Panc1 (cell line): ENCODE measurements at regions of chr19 and their contacts with region 1.

Region 1: GRCh38 chr19:40633207-40633606 is 32.0 kb downstream of the LTBP4 start:
- DNase-seq: no peak
- ATAC-seq: no peak
- H3K4me3 ChIP-seq: no peak overlapping the region
- H3K27ac ChIP-seq: no peak overlapping the region
- H3K4me1 ChIP-seq: no peaks in the 10 kb centered on the region
- H3K27me3 ChIP-seq: no peaks in the 10 kb centered on the region
- CTCF ChIP-seq: no peak

Region 2: GRCh38 chr19:40425450-40426287 is 207.5 kb before region 1 on chr19 and contains the start of gene SERTAD1:
- CTCF ChIA-PET with region 1: no interaction called
- POLR2A ChIA-PET with region 1: no interaction called
- in situ Hi-C with region 1: no loop called
- intact Hi-C with region 1: no loop called
- DNase-seq: peak; percentile 87
- ATAC-seq: peak; percentile 85
- H3K4me3 ChIP-seq: peak within 1 kb of the TSS; percentile 85 to 93
- H3K27ac ChIP-seq: peak within 1 kb of the TSS; percentile 94
- H3K4me1 ChIP-seq: peaks cover 24% of the 10 kb centered on the region
- H3K27me3 ChIP-seq: no peaks in the 10 kb centered on the region
- CTCF ChIP-seq: peak; percentile 92
- total RNA-seq, gene SERTAD1: 13.4 TPM

Region 3: GRCh38 chr19:40465557-40466150 is 167.6 kb before region 1 on chr19 and contains the start of gene BLVRB:
- CTCF ChIA-PET with region 1: interaction called, 10 read pairs
- POLR2A ChIA-PET with region 1: no interaction called
- in situ Hi-C with region 1: no loop called
- intact Hi-C with region 1: no loop called
- DNase-seq: peak; percentile 92
- ATAC-seq: peak; percentile 96
- H3K4me3 ChIP-seq: peak within 1 kb of the TSS; percentile 68 to 82
- H3K27ac ChIP-seq: peak within 1 kb of the TSS; percentile 82
- H3K4me1 ChIP-seq: peaks cover 10% of the 10 kb centered on the region; the same call in 1 of the 2 replicates
- H3K27me3 ChIP-seq: no peaks in the 10 kb centered on the region
- CTCF ChIP-seq: no peak
- total RNA-seq, gene BLVRB: 45.6 TPM

Region 4: DNA sequence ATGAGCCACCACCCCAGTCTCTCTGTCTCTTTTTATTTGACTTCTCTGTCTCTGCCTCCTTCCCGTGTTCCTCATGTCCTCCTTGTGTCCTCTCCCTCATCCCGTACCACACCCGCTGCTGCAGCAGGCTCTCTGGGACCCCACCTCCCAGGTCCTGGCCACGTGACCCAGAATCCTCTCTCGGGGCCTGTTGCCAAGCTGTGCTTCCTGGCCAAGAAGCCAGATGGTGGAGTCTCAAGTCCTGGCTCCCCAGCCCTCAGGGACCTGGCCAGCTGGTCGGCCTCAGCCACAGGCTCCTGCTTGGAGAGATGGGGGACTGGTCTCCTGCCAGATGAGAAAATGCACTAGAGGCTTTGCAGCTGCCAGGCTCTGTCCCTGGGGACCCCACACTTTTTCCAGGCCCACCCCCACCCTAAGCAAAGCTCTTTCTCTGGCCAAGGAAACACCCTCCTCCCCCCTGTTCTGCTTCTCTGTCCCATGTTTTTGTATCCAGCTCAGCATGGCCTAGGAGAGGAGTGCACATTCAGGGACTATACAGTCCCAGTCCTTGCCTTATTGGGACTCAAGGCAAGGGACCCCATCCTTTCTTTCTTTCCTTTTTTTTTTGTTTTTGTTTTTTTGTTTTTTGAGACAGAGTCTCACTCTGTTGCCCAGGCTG is 90.9 kb before region 1 on chr19:
- CTCF ChIA-PET with region 1: interaction called, 13 read pairs
- POLR2A ChIA-PET with region 1: no interaction called
- in situ Hi-C with region 1: no loop called
- intact Hi-C with region 1: no loop called
- DNase-seq: no peak
- ATAC-seq: no peak
- H3K4me3 ChIP-seq: no peak overlapping the region
- H3K27ac ChIP-seq: no peak overlapping the region
- H3K4me1 ChIP-seq: no peaks in the 10 kb centered on the region
- H3K27me3 ChIP-seq: no peaks in the 10 kb centered on the region
- CTCF ChIP-seq: no peak

Region 5: GRCh38 chr19:40560092-40560507 is 73.1 kb before region 1 on chr19:
- CTCF ChIA-PET with region 1: interaction called, 14 read pairs
- POLR2A ChIA-PET with region 1: no interaction called
- in situ Hi-C with region 1: no loop called
- intact Hi-C with region 1: no loop called
- DNase-seq: no peak
- ATAC-seq: no peak
- H3K4me3 ChIP-seq: no peak overlapping the region
- H3K27ac ChIP-seq: no peak overlapping the region
- H3K4me1 ChIP-seq: no peaks in the 10 kb centered on the region
- H3K27me3 ChIP-seq: no peaks in the 10 kb centered on the region
- CTCF ChIP-seq: no peak

Region 6: DNA sequence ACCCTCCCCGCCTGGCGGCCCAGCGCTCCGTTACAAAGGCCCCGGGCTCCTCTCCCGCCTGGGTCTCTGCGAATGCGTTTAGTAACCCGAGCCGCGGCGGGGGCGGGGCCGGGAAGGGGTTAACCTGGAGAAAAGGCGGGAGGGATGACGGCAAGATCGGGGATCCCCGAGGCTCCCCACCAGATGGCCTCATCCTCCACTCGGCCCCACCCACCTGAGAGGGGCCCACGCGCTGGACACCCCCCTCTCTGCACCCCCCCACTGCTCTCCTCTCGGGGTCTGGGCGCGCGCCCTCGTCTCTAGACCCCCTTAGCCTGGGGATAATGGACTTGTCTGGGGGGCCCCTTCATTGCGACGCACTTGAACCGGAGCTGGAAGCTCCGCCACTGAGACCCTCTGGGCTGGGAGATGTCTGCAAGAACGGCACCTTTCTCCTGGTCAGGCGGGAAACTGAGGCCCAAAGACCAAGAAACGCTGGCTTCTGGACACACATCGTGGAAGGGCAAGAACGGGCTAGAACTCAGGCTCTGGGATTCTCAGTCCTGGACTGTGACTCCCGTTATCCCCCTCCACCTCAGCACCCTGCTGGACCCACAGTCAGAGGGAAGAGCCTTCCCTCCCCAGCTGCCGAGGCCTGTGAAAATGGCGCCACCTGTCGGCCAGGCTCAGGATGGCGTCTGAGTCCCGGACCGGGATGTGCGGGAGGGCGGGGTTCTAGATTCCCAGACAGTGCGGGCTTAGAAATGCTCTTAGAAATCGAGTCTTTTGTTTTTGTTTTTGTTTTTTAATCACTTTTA is 34.9 kb before region 1 on chr19:
- CTCF ChIA-PET with region 1: no interaction called
- POLR2A ChIA-PET with region 1: no interaction called
- in situ Hi-C with region 1: no loop called
- intact Hi-C with region 1: no loop called
- DNase-seq: no peak
- ATAC-seq: peak; percentile 77
- H3K4me3 ChIP-seq: peak overlapping the region; percentile 50 to 59
- H3K27ac ChIP-seq: peak overlapping the region; percentile 66; the same call in 1 of the 2 replicates
- H3K4me1 ChIP-seq: peaks cover 22% of the 10 kb centered on the region
- H3K27me3 ChIP-seq: no peaks in the 10 kb centered on the region
- CTCF ChIP-seq: peak; percentile 93

Region 7: GRCh38 chr19:40889366-40889765 is 256.2 kb after region 1 on chr19:
- CTCF ChIA-PET with region 1: no interaction called
- POLR2A ChIA-PET with region 1: no interaction called
- in situ Hi-C with region 1: no loop called
- intact Hi-C with region 1: no loop called
- DNase-seq: no peak
- ATAC-seq: no peak
- H3K4me3 ChIP-seq: no peak overlapping the region
- H3K27ac ChIP-seq: no peak overlapping the region
- H3K4me1 ChIP-seq: no peaks in the 10 kb centered on the region
- H3K27me3 ChIP-seq: no peaks in the 10 kb centered on the region
- CTCF ChIP-seq: no peak